Activated CD4-positive, alpha-beta T cell treated with anti-CD3 and anti-CD28 coated beads, Interleukin-2, amount 10 ng/mL, durations not matched to agents 24 days and 14 days (primary cell): ENCODE measurements at regions of chr11 and their contacts with region 1.

Region 1: GRCh38 chr11:120511116-120511819 is at the start of gene GRIK4:
- DNase-seq: peak; percentile 92
- H3K4me3 Mint-ChIP-seq: peak within 1 kb of the TSS; percentile 35
- H3K27ac Mint-ChIP-seq: no peak within 1 kb of the TSS
- H3K4me1 Mint-ChIP-seq: peaks cover 2% of the 10 kb centered on the region
- H3K27me3 Mint-ChIP-seq: peaks cover 71% of the 10 kb centered on the region
- total RNA-seq, gene GRIK4: 0.02 and 0.09 TPM in 2 replicates

Region 2: GRCh38 chr11:120579611-120580031 is 68.4 kb after region 1 on chr11:
- intact Hi-C with region 1: no loop called
- DNase-seq: no peak
- H3K4me3 Mint-ChIP-seq: no peak overlapping the region
- H3K27ac Mint-ChIP-seq: no peak overlapping the region
- H3K4me1 Mint-ChIP-seq: peaks cover 11% of the 10 kb centered on the region
- H3K27me3 Mint-ChIP-seq: peaks cover 6% of the 10 kb centered on the region

Region 3: GRCh38 chr11:120682866-120683265 is 171.6 kb after region 1 on chr11:
- intact Hi-C with region 1: loop called (anchors 1 kb)
- DNase-seq: no peak
- H3K4me3 Mint-ChIP-seq: no peak overlapping the region
- H3K27ac Mint-ChIP-seq: no peak overlapping the region
- H3K4me1 Mint-ChIP-seq: no peaks in the 10 kb centered on the region
- H3K27me3 Mint-ChIP-seq: peaks cover 9% of the 10 kb centered on the region

Region 4: GRCh38 chr11:120801801-120802689 is 290.8 kb after region 1 on chr11:
- intact Hi-C with region 1: loop called (anchors 1 kb)
- DNase-seq: peak; percentile 83
- H3K4me3 Mint-ChIP-seq: no peak overlapping the region
- H3K27ac Mint-ChIP-seq: peak overlapping the region; percentile 69
- H3K4me1 Mint-ChIP-seq: no peaks in the 10 kb centered on the region
- H3K27me3 Mint-ChIP-seq: peaks cover 2% of the 10 kb centered on the region

Region 5: GRCh38 chr11:120952461-120953434 is 441.5 kb after region 1 on chr11:
- intact Hi-C with region 1: loop called (anchors 5 kb)
- DNase-seq: peak; percentile 86
- H3K4me3 Mint-ChIP-seq: peak overlapping the region; percentile 54
- H3K27ac Mint-ChIP-seq: no peak overlapping the region
- H3K4me1 Mint-ChIP-seq: peaks cover 7% of the 10 kb centered on the region
- H3K27me3 Mint-ChIP-seq: peaks cover 7% of the 10 kb centered on the region

Region 6: DNA sequence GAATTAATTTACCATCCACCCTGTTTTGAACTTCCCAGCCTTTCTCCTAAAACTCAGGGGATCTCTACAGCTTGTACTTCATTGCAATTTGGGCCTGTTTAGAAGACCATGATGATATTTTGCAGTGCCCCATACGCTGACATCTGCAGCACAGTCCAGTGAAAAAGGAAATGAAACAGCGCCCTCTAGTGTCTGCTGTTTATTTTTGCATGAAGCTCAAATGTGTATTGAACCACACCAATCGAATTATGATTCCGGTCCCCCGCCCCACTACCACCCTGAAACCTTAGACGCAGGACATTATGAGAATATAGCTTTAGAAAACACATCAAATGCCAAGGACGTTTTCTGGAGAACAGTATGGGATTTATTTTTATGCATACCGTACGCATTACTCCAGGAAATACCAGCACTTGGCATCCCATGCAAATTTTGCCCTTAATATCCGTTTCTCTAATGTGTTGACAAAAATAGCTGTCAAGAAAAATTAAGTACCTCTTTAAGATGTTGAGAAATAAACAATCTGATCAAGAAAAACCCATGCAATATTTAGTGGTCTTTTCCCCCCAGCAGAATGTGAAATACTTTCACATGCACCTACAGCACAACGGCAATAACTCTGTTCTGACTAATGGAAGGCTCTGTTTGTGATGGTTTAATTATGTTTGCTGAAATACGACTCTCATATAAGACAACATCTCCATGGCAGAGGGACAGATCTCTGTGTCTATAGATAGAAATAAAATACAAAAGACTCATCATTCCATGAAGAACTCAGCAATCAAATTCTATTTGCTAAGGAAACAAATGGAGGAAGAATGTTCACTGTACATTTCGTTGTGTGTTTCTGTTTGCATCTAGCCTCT is 683.7 kb after region 1 on chr11:
- intact Hi-C with region 1: loop called (anchors 2 kb)
- DNase-seq: peak; percentile 89
- H3K4me3 Mint-ChIP-seq: no peak overlapping the region
- H3K27ac Mint-ChIP-seq: no peak overlapping the region
- H3K4me1 Mint-ChIP-seq: no peaks in the 10 kb centered on the region
- H3K27me3 Mint-ChIP-seq: peaks cover 22% of the 10 kb centered on the region